ENCODE measurements at regions of chr5 and their contacts with region 1.

Region 1: GRCh38 chr5:137320056-137321045 is 178.8 kb downstream of the SPOCK1 start:
- DNase-seq: peak; percentile 78
- H3K4me3 Mint-ChIP-seq: no peak overlapping the region
- H3K27ac Mint-ChIP-seq: peak overlapping the region; percentile 32
- H3K4me1 Mint-ChIP-seq: peaks cover 11% of the 10 kb centered on the region
- H3K27me3 Mint-ChIP-seq: no peaks in the 10 kb centered on the region
- CTCF ChIP-seq: peak; percentile 93

Region 2: GRCh38 chr5:136082390-136083193 is 1237.8 kb before region 1 on chr5:
- CTCF ChIA-PET with region 1: no interaction called
- POLR2A ChIA-PET with region 1: no interaction called
- intact Hi-C with region 1: no loop called
- DNase-seq: peak; percentile 85
- H3K4me3 Mint-ChIP-seq: no peak overlapping the region
- H3K27ac Mint-ChIP-seq: no peak overlapping the region
- H3K4me1 Mint-ChIP-seq: no peaks in the 10 kb centered on the region
- H3K27me3 Mint-ChIP-seq: no peaks in the 10 kb centered on the region
- CTCF ChIP-seq: peak; percentile 93

Region 3: GRCh38 chr5:136802383-136802782 is 518.0 kb before region 1 on chr5:
- CTCF ChIA-PET with region 1: interaction called, 40 read pairs
- POLR2A ChIA-PET with region 1: no interaction called
- intact Hi-C with region 1: loop called (anchors 1 kb)
- DNase-seq: peak; percentile 34
- H3K4me3 Mint-ChIP-seq: no peak overlapping the region
- H3K27ac Mint-ChIP-seq: no peak overlapping the region
- H3K4me1 Mint-ChIP-seq: no peaks in the 10 kb centered on the region
- H3K27me3 Mint-ChIP-seq: peaks cover 43% of the 10 kb centered on the region
- CTCF ChIP-seq: peak; percentile 49

Region 4: GRCh38 chr5:137310051-137310730 is 10.2 kb before region 1 on chr5:
- CTCF ChIA-PET with region 1: interaction called, 49 read pairs
- POLR2A ChIA-PET with region 1: interaction called, 12 read pairs
- intact Hi-C with region 1: no loop called
- DNase-seq: peak; percentile 88
- H3K4me3 Mint-ChIP-seq: peak overlapping the region; percentile 18
- H3K27ac Mint-ChIP-seq: peak overlapping the region; percentile 95
- H3K4me1 Mint-ChIP-seq: peaks cover 28% of the 10 kb centered on the region
- H3K27me3 Mint-ChIP-seq: no peaks in the 10 kb centered on the region
- CTCF ChIP-seq: no peak

Region 5: DNA sequence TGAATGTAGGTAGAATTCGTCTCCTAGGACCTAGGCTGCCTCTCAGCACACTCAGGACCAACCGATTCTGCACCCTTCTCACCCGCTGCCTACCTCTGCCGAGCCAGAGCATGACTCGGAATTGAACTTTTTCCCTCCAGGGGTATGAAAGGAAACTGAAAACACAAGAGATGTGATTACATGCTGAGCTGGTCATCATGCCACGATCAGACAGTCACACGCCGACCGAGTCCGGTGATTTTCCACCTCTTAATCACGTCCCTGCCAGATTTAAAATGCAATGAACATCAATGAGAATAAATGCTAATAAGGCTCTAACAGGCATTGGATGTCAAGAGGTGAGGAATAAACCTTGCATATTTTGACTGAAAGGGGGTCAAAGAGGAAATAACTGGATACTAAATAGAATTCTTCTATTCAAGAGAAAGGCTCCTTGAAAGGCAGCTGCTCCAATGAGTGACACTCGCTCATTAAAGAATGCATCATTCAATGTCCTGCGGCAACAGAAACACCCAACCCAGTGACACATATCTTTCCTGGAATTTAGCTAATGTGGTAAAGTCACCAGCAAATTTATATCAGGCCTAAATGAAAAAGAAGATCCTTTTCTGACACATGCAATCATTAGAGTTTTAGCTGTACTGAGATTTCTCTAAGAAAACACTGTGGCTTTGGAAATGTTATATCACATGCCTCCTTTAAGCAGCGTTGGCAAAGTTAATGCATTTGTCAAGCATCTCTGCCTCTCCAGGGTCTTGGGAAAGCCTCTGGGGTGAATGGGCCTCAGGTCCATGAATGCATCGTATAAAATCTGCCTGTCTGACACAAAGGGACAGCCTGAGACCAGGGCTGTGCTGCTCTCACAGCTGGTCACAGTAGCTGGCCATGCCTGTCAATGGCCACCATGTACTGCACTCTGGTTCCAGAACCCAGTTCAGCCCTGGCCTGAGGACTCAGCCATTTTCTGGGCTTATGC is 50.0 kb after region 1 on chr5:
- CTCF ChIA-PET with region 1: interaction called, 11 read pairs
- POLR2A ChIA-PET with region 1: interaction called, 3 read pairs
- intact Hi-C with region 1: no loop called
- DNase-seq: peak; percentile 38
- H3K4me3 Mint-ChIP-seq: no peak overlapping the region
- H3K27ac Mint-ChIP-seq: no peak overlapping the region
- H3K4me1 Mint-ChIP-seq: peaks cover 10% of the 10 kb centered on the region
- H3K27me3 Mint-ChIP-seq: no peaks in the 10 kb centered on the region
- CTCF ChIP-seq: no peak

Region 6: DNA sequence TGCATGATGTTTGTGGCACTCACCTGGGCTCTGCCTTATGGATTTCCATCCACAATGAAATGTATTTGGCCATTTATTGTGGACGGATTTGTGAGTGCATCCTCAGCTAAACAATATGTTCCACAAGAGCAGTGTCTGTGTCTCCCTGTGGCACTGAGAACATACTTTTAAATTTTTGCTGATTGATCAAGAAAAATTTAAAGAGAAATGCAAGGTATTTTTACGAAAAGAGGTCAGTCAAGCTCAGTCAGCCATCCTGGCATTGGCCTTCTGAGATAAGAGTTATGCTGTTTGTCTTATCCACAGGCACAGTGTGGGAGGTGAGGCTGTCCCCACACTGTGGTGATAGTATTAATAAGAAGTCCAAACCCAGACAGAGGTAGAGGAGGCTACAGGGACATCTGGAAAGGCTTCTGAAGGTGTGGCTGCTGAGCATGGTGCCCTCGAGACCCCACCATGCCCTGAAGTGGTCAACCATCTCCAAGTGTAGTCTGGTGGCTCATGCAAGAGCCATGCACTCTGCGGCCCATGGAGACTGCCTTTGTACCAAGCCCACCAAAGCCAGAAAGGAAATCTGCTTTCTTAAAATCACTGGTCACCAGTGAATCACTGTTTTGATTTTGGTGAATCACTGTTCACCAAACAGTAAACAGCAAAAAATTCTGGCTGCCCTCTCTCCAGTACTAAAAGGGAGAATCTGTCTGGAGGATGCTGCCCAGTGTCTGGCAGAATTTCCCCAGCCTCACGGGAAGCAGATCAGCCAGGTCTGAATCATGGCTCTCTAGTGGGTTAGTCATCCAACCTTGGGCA is 150.0 kb after region 1 on chr5:
- CTCF ChIA-PET with region 1: interaction called, 22 read pairs
- POLR2A ChIA-PET with region 1: no interaction called
- intact Hi-C with region 1: no loop called
- DNase-seq: peak; percentile 97
- H3K4me3 Mint-ChIP-seq: no peak overlapping the region
- H3K27ac Mint-ChIP-seq: peak overlapping the region; percentile 69
- H3K4me1 Mint-ChIP-seq: peaks cover 26% of the 10 kb centered on the region
- H3K27me3 Mint-ChIP-seq: no peaks in the 10 kb centered on the region
- CTCF ChIP-seq: no peak

Region 7: DNA sequence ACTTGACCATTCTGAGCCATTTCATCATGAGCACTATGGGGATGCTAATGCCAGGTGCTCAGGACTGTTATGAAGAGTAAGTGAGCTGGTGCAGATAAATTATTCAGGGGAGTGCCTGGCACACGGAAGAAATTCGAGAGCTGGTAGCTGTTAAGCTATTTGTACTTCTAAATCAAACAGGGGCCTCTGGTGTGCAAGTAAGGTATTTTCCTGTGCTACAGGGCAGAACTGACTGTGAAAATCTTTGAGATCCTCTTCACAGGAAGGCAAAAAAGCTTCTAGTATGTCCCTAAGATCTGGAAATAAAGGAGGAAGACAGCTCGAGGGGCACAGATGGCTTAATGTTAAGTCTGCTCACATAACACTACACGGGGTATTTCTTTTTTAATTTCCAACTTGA is 285.1 kb after region 1 on chr5:
- CTCF ChIA-PET with region 1: interaction called, 11 read pairs
- POLR2A ChIA-PET with region 1: no interaction called
- intact Hi-C with region 1: loop called (anchors 1 kb)
- DNase-seq: peak; percentile 26
- H3K4me3 Mint-ChIP-seq: no peak overlapping the region
- H3K27ac Mint-ChIP-seq: no peak overlapping the region
- H3K4me1 Mint-ChIP-seq: peaks cover 6% of the 10 kb centered on the region
- H3K27me3 Mint-ChIP-seq: peaks cover 17% of the 10 kb centered on the region
- CTCF ChIP-seq: peak; percentile 28

Region 8: DNA sequence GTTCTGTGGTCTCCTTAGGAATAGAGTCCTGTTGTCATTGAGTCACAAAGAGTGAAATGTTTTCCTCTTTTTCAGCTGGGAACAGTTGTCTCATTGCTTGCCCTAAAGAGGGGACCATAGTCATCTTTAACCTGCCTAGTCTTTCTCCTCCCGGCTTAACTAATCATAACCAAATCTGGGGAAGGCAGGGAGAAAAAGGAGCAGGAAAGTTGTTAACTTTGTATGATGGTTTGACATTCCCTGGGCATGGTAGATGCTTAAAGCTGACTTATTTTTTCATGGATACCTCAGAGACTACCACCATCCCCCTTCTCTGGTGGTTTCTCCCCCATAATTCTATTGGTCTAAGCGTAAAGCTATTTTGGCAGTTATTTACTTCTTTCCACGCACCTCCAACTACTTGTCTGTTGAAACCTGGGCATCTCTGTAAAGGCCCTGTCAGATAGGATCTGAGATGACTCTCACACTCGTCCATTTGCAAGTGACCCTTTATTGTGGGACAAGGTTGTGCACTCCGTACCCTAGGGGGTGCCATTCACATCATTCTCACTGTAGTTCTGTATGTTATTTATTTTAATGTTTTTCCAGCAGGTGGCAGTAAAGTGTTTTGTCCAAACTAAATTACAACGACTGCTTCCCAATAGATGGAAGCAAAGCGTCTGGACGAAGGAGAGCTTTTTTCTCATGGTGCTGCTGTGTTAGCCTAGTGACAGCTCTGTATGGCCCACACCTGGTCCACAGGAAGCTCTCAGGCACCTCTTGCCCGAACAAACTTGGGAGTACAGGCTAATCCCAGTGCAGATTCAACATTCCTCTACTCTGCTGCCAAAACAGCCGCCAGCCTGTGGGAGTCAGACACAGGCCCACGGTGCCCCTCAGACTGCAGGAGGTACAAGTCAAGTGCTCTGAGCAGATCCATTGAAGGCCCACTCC is 715.5 kb after region 1 on chr5:
- CTCF ChIA-PET with region 1: no interaction called
- POLR2A ChIA-PET with region 1: no interaction called
- intact Hi-C with region 1: no loop called
- DNase-seq: peak; percentile 96
- H3K4me3 Mint-ChIP-seq: no peak overlapping the region
- H3K27ac Mint-ChIP-seq: peak overlapping the region; percentile 4
- H3K4me1 Mint-ChIP-seq: peaks cover 26% of the 10 kb centered on the region
- H3K27me3 Mint-ChIP-seq: no peaks in the 10 kb centered on the region
- CTCF ChIP-seq: peak; percentile 93